ENCODE measurements at regions of chr22 and their contacts with region 1.

Region 1: GRCh38 chr22:17057959-17058814 is 26.6 kb upstream of the IL17RA start:
- DNase-seq: no peak

Region 2: DNA sequence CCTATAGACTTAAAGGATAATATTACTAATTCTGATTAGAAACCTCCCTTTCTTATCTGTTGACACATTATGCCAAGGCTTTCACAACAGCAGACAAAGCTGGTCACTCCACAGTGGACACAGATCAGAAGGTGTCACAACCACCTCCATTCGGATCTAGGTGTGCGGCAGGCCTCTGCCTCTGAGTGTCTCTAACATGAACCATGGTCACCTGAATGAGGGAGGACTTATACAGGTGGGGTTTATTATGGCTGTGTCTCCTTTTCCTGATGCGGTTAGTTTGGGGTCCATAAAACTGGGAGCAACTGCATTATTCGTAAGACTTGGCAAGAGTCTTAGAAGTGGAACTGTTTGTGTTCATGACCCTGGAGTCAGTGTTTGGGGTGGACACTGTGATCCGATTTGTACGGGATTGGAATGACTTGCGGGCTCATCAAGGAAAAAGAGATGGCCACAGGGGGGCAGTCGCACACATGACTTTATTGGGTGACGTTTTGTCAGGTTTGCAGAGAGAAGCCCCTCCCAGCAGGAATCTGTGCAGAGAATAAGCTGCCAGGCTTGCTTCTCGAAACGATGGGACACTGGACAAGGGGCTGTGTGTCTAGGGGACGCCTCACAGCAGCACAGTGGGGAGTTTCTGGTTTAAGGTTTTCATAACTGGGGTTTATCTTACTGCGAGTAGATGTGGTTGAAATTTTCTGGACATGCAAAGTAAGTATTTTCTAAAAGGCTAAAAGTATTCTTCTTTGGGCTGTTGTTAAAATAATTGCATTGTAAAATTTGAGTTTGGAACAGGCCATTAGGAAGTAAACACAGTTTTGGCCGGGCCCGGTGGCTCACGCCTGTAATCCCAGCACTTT is 140.8 kb before region 1 on chr22:
- intact Hi-C with region 1: loop called (anchors 5 kb)
- DNase-seq: no peak